Naive thymus-derived CD4-positive, alpha-beta T cell (primary cell): ENCODE measurements at regions of chr16 and their contacts with region 1.

Region 1: GRCh38 chr16:4734063-4734729 is at the starts of genes ANKS3 and DNAAF8:
- DNase-seq: peak; percentile 72 to 90 (median 79)
- ATAC-seq: peak; percentile 86
- H3K4me3 ChIP-seq: peak within 1 kb of the TSS; percentile 98
- H3K4me3 Mint-ChIP-seq: peak within 1 kb of the TSS; percentile 84 to 96 (median 92)
- H3K27ac ChIP-seq: peak within 1 kb of the TSS; percentile 79
- H3K27ac Mint-ChIP-seq: peak within 1 kb of the TSS; percentile 73 to 92 (median 90)
- H3K4me1 ChIP-seq: peaks cover 6 to 9% of the 10 kb centered on the region in 2 donors
- H3K4me1 Mint-ChIP-seq: peaks cover 9 to 32% (median 20%) of the 10 kb centered on the region in 7 donors
- H3K27me3 ChIP-seq: no peaks in the 10 kb centered on the region
- H3K27me3 Mint-ChIP-seq: peaks cover 0 to 3% (median 0%) of the 10 kb centered on the region in 5 donors
- total RNA-seq, gene ANKS3: 17.6 to 32.7 (median 25.3) TPM
- total RNA-seq, gene DNAAF8: 0.11 to 0.57 (median 0.27) TPM

Region 2: DNA sequence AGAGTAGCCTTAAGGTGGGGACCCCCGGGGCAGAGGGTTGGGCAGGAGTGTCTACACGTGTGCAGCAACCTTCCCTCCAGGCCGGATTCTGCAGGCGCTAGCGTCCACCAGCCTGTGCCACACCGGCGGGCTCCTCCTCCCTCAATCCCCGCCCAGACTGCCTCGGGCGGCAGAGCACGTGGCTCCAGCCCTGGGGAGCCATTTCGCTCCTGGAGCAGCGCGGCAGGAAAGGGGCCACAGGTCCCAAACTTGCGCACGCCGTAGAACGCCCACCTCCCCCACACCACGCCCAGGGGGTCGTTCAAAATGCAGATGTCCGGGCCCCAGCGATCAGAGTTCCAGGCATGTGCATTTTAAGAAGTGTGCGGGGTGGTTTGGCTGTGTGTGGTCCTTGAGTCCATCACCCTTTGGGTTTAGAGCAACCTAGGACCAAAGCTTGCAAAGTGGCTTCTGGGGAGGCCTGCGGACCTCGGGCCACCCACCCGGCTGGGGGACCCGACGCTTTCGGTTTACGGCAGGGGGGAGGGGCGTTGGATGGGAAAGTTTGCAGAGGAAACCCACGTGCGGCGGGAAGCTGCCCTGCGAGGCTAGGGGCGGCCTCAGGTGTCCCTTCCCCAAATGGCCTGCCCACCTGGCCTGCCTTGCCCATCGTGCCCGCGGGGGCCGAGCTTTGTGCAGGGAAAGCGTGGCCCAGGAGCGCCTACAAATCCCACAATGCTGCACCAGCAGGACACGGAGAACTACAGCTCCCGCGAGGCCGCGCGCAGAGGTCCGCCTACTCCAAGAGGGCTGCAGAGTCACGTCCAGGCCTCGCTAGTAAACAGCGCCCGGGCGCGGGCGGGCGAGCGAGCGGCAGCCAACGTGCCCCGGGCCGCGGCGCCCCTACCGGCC is 462.8 kb before region 1 on chr16:
- CTCF ChIA-PET with region 1: no interaction called
- POLR2A ChIA-PET with region 1: no interaction called
- intact Hi-C with region 1: loop called in 1 of 2 experiments (anchors 10 kb)
- DNase-seq: peak; percentile 68 to 90 (median 84)
- ATAC-seq: peak; percentile 89
- H3K4me3 ChIP-seq: peak overlapping the region; percentile 99
- H3K4me3 Mint-ChIP-seq: peak overlapping the region; percentile 85 to 97 (median 92)
- H3K27ac ChIP-seq: peak overlapping the region; percentile 58
- H3K27ac Mint-ChIP-seq: peak overlapping the region; percentile 67 to 98 (median 83)
- H3K4me1 ChIP-seq: peaks cover 5 to 13% of the 10 kb centered on the region in 2 donors
- H3K4me1 Mint-ChIP-seq: peaks cover 8 to 23% (median 15%) of the 10 kb centered on the region in 7 donors
- H3K27me3 ChIP-seq: no peaks in the 10 kb centered on the region
- H3K27me3 Mint-ChIP-seq: no peaks in the 10 kb centered on the region

Region 3: DNA sequence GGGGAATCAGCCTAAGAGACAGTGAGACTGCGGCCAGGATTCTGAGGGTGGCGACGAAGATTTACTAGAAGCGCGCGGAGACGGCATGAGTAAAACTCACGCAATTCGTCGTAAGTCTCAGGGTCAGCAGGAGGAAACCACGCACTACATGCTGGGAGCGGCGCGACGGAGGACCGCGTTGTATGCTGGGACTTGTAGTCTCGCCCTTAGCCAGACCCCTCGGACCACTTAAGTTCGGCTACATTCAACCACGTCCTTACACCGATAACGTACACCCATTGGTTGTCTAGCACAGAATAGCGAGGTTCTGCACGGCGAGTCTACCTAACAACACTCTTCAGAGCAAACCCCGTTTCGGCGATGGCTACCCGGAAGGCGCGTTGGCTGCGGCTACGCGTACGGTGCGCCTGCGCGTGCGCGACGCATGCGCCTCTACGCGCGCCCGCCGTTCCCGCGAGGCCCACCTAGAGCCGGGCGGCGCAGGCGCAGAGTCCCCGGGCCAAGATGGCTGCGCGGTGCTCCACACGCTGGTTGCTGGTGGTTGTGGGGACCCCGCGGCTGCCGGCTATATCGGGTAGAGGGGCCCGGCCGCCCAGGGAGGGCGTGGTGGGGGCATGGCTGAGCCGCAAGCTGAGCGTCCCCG is 308.7 kb before region 1 on chr16 and contains the start of gene DNAJA3:
- CTCF ChIA-PET with region 1: no interaction called
- POLR2A ChIA-PET with region 1: no interaction called
- intact Hi-C with region 1: loop called in 1 of 2 experiments (anchors 1 kb)
- DNase-seq: peak; percentile 91 to 97 (median 95)
- ATAC-seq: peak; percentile 93
- H3K4me3 ChIP-seq: peak within 1 kb of the TSS; percentile 97
- H3K4me3 Mint-ChIP-seq: peak within 1 kb of the TSS; percentile 92 to 99 (median 98)
- H3K27ac ChIP-seq: peak within 1 kb of the TSS; percentile 95
- H3K27ac Mint-ChIP-seq: peak within 1 kb of the TSS; percentile 99 to 100 (median 100)
- H3K4me1 ChIP-seq: peaks cover 18% of the 10 kb centered on the region in 2 donors
- H3K4me1 Mint-ChIP-seq: peaks cover 26 to 37% (median 31%) of the 10 kb centered on the region in 7 donors
- H3K27me3 ChIP-seq: no peaks in the 10 kb centered on the region
- H3K27me3 Mint-ChIP-seq: peaks cover 0 to 4% (median 0%) of the 10 kb centered on the region in 5 donors
- total RNA-seq, gene DNAJA3: 33.6 to 79.8 (median 70.5) TPM

Region 4: GRCh38 chr16:4660454-4661007 is 73.7 kb before region 1 on chr16:
- CTCF ChIA-PET with region 1: interaction called, 4 read pairs
- POLR2A ChIA-PET with region 1: interaction called, 6 read pairs
- intact Hi-C with region 1: loop called in 1 of 2 experiments (anchors 5 kb)
- DNase-seq: peak in 8 of 9 donors; percentile 49 to 81 (median 73)
- ATAC-seq: peak; percentile 60
- H3K4me3 ChIP-seq: no peak overlapping the region
- H3K4me3 Mint-ChIP-seq: peak overlapping the region in 9 of 10 donors; percentile 48 to 78 (median 62)
- H3K27ac ChIP-seq: peak overlapping the region; percentile 74
- H3K27ac Mint-ChIP-seq: peak overlapping the region; percentile 88 to 96 (median 92)
- H3K4me1 ChIP-seq: peaks cover 34 to 65% of the 10 kb centered on the region in 2 donors
- H3K4me1 Mint-ChIP-seq: peaks cover 38 to 72% (median 64%) of the 10 kb centered on the region in 7 donors
- H3K27me3 ChIP-seq: no peaks in the 10 kb centered on the region
- H3K27me3 Mint-ChIP-seq: no peaks in the 10 kb centered on the region

Region 5: GRCh38 chr16:4766874-4767628 is 32.9 kb after region 1 on chr16 and contains the start of gene ZNF500:
- CTCF ChIA-PET with region 1: interaction called, 8 read pairs
- POLR2A ChIA-PET with region 1: interaction called, 41 read pairs
- intact Hi-C with region 1: loop called (anchors 1 kb)
- DNase-seq: peak; percentile 90 to 98 (median 92)
- ATAC-seq: peak; percentile 99
- H3K4me3 ChIP-seq: peak within 1 kb of the TSS; percentile 82
- H3K4me3 Mint-ChIP-seq: peak within 1 kb of the TSS; percentile 90 to 94 (median 92)
- H3K27ac ChIP-seq: peak within 1 kb of the TSS; percentile 84
- H3K27ac Mint-ChIP-seq: peak within 1 kb of the TSS; percentile 86 to 96 (median 92)
- H3K4me1 ChIP-seq: peaks cover 17 to 19% of the 10 kb centered on the region in 2 donors
- H3K4me1 Mint-ChIP-seq: peaks cover 24 to 49% (median 34%) of the 10 kb centered on the region in 7 donors
- H3K27me3 ChIP-seq: no peaks in the 10 kb centered on the region
- H3K27me3 Mint-ChIP-seq: no peaks in the 10 kb centered on the region
- total RNA-seq, gene ZNF500: 13.8 to 43.0 (median 24.7) TPM

Region 6: DNA sequence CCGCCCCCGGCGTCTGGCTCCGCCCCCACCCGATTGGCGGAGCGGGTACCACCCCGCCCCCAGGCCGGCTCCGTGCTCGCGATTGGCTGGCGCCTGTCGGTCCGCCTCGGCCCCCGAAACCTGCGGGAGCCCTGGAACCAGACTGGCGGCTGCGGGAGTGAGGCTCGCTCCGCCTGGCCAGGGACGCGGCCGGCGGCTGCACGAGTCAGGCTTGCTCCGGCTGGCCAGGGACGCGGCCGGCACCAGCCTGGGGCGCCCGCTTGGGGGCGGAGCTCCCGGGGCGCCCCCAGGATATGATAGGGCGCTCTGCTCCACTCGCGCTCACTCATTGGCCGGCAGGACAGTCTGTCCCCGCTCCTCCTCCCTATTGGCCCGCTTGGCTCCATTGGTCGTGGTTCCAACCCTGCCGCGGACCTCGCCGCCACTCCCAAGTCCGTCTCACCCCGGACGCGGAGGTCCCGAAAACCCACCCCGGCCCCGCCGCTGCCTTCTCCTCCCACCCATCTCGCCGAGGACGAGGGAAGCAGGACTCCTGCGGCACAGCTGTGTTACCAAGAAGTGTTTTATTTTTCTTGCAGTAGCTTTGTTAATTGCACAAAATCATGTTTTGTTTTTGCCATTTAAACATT is 68.6 kb after region 1 on chr16:
- CTCF ChIA-PET with region 1: interaction called, 3 read pairs
- POLR2A ChIA-PET with region 1: interaction called, 16 read pairs
- intact Hi-C with region 1: loop called (anchors 1 kb)
- DNase-seq: peak; percentile 82 to 97 (median 93)
- ATAC-seq: peak; percentile 93
- H3K4me3 ChIP-seq: peak overlapping the region; percentile 79
- H3K4me3 Mint-ChIP-seq: peak overlapping the region; percentile 81 to 86 (median 86)
- H3K27ac ChIP-seq: peak overlapping the region; percentile 60
- H3K27ac Mint-ChIP-seq: peak overlapping the region in 8 of 9 donors; percentile 36 to 84 (median 74)
- H3K4me1 ChIP-seq: peaks cover 10 to 18% of the 10 kb centered on the region in 2 donors
- H3K4me1 Mint-ChIP-seq: peaks cover 7 to 19% (median 12%) of the 10 kb centered on the region in 7 donors
- H3K27me3 ChIP-seq: no peaks in the 10 kb centered on the region
- H3K27me3 Mint-ChIP-seq: no peaks in the 10 kb centered on the region